PC-3 (cell line): ENCODE measurements at regions of chr11 and their contacts with region 1.

Region 1: DNA sequence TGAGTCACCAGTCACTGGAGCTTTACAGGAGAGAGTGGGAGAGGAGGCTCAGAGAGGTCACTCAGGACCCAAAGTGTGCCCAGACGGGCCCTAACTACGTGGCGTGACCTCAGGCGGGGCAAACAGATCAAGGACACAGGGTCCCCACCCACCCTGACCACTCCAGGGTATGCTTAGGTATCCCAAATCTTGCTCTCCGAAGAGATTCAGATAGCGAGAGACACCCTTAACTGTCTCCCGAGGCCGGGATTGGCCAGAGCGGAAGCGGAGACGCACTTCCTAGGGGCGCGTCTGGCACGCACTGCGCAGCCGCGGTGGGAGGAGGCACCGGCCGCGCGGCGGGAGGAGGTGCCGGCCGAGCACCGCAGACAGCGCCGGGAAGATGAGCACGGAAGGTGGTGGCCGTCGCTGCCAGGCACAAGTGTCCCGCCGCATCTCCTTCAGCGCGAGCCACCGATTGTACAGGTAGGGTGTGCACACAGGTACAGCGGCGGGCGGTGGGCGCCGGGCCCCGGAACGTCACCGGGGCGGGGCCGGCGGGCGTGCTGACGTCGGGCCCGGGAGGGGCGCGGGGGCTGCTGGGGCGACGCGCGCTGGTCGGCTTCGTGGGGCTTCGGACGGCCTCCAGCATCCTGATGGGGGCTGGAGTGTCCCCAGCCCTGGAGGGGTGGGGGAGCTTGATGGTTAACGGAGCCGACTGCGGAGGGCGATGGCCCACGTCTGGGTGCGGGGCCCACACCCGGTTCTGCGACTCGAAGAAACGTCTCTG is at the start of gene PTS:
- DNase-seq: peak; percentile 95
- ATAC-seq: peak; percentile 92
- H3K4me3 ChIP-seq: peak within 1 kb of the TSS; percentile 93
- H3K27ac ChIP-seq: peak within 1 kb of the TSS; percentile 81
- H3K4me1 ChIP-seq: peaks cover 36% of the 10 kb centered on the region
- H3K27me3 ChIP-seq: no peaks in the 10 kb centered on the region
- CTCF ChIP-seq: no peak
- total RNA-seq, gene PTS: 53.0 and 77.4 TPM in 2 replicates

Region 2: DNA sequence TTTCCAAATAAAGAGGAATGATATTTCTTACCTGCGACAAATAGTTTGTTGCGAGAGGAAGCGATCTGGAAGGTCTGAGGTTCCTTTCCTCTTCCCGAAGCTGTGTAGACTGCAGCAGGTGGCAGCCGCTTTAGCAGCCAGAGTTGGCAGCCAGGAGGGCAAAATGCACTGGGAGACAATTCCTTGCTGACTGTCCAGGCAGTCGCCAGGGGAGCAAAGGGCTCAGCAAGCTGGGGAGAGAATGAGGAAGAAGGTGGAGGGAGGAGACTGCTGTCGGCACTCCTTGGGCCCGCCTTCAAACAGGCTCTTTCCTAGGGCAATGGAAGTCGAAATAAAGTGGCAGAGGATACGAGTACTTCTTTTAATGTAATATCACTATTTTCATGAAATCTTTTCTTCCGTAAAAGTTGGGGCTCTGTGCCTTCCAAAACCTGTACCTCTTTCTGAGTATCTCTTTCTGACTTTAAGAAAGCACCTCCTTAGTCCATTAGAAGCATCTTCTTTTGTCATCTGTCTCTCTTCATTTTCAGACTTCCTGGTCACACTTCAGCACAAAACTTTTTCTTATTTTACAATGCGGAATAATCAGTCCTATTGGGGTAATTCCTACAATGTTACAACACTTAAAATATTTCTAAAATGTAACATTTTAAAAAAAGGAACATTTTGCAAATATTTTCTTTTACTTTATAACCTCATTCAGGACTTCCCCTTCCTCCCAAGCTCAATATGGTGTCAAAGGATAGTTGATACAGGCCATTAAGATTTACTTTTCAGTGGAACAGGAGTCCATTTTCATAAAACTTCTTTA is 62.2 kb before region 1 on chr11 and contains the start of gene IL18:
- CTCF ChIA-PET with region 1: no interaction called
- POLR2A ChIA-PET with region 1: interaction called, 4 read pairs
- intact Hi-C with region 1: loop called (anchors 5 kb)
- DNase-seq: peak; percentile 87
- ATAC-seq: peak; percentile 84
- H3K4me3 ChIP-seq: peak within 1 kb of the TSS; percentile 73
- H3K27ac ChIP-seq: peak within 1 kb of the TSS; percentile 95
- H3K4me1 ChIP-seq: peaks cover 59% of the 10 kb centered on the region
- H3K27me3 ChIP-seq: no peaks in the 10 kb centered on the region
- CTCF ChIP-seq: no peak
- total RNA-seq, gene IL18: 53.6 and 61.6 TPM in 2 replicates

Region 3: DNA sequence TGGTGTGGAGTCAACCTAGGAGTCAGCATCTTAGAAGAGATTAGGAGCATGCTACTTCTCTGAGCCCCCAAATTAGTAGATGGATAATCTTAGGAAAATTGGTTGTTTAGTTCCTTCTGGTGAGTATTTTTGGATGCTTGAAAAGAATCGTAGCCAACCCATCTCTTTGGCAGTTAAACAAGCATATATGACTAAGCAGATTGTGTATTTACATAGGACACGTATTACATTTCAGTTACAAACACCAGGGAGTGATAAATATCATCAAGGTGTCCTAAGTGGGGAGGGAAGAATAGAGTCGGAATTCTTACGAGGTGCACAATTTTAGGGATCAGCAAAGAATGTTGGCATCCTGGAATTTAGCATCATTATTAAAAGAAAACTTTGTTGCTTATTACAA is 21.0 kb after region 1 on chr11:
- CTCF ChIA-PET with region 1: no interaction called
- POLR2A ChIA-PET with region 1: no interaction called
- intact Hi-C with region 1: loop called (anchors 2 kb)
- DNase-seq: peak; percentile 82
- ATAC-seq: peak; percentile 90
- H3K4me3 ChIP-seq: peak overlapping the region; percentile 16; the same call in 1 of the 2 replicates
- H3K27ac ChIP-seq: peak overlapping the region; percentile 74
- H3K4me1 ChIP-seq: peaks cover 26% of the 10 kb centered on the region
- H3K27me3 ChIP-seq: no peaks in the 10 kb centered on the region
- CTCF ChIP-seq: no peak

Region 4: GRCh38 chr11:112321521-112322172 is 95.4 kb after region 1 on chr11:
- CTCF ChIA-PET with region 1: no interaction called
- POLR2A ChIA-PET with region 1: no interaction called
- intact Hi-C with region 1: no loop called
- DNase-seq: peak; percentile 96
- ATAC-seq: peak; percentile 62
- H3K4me3 ChIP-seq: no peak overlapping the region
- H3K27ac ChIP-seq: peak overlapping the region; percentile 67
- H3K4me1 ChIP-seq: peaks cover 51% of the 10 kb centered on the region
- H3K27me3 ChIP-seq: no peaks in the 10 kb centered on the region
- CTCF ChIP-seq: no peak